ENCODE measurements at regions of chr10 and their contacts with region 1.

Region 1: GRCh38 chr10:121662945-121663917 is 65.0 kb upstream of the FGFR2 start:
- DNase-seq: peak; percentile 36 to 90
- H3K4me3 ChIP-seq: no peak overlapping the region
- H3K27ac ChIP-seq: no peak overlapping the region
- H3K4me1 ChIP-seq: peaks cover 0 to 6% (median 4%) of the 10 kb centered on the region in 4 experiments; a peak in 5 of 7 replicates
- H3K27me3 ChIP-seq: no peaks in the 10 kb centered on the region
- CTCF ChIP-seq: peak; percentile 76 to 86 (median 84)
- EP300 ChIP-seq: no peak
- POLR2A ChIP-seq: no peak
- RAD21 ChIP-seq: peak; percentile 82 to 83

Region 2: GRCh38 chr10:121516093-121516865 is 147.0 kb before region 1 on chr10:
- CTCF ChIA-PET with region 1: no interaction called
- POLR2A ChIA-PET with region 1: no interaction called
- DNase-seq: no peak
- H3K4me3 ChIP-seq: no peak overlapping the region
- H3K27ac ChIP-seq: no peak overlapping the region
- H3K4me1 ChIP-seq: peaks cover 0 to 6% (median 0%) of the 10 kb centered on the region in 4 experiments; a peak in 2 of 7 replicates
- H3K27me3 ChIP-seq: no peaks in the 10 kb centered on the region
- CTCF ChIP-seq: no peak
- EP300 ChIP-seq: no peak
- POLR2A ChIP-seq: no peak
- RAD21 ChIP-seq: no peak

Region 3: DNA sequence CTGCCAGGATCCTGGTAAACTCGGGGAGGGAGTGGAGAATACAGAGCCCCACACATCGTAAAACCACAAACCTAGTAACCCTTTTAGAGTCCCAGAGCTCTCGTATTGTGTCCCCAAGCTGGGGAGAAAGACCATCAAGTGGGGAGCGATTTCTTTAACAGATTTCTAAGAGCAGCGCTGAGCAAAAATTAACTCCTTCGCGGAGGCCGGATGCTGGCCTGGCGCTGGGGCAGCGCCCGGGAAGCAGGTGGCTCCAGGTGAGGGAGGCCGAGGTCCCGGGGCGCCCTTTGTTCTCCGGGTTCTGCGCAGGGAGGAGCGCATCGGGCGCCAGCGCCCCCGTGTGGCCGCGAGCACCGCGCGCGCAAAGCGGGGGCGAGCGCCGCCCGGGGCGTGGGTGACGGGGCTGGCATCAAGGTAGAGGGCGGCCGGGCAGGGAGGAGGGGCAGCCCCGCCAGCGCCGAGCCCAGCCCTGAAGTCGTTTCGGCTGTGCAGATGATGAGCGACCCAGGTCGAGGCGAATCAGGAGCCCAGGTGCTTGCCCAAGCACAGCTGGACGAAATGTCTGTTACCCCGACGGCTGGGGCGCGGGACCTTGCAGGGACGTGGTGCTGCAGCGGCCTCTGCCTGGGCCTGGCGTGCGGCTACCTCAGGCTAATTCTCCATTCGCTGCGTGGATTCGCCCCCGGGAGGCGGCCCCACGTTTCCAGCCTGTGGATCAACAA is 54.6 kb before region 1 on chr10:
- CTCF ChIA-PET with region 1: interaction called, 27 read pairs
- POLR2A ChIA-PET with region 1: no interaction called
- DNase-seq: peak in 1 of 2 experiments; percentile 90
- H3K4me3 ChIP-seq: peak overlapping the region in 2 of 4 experiments; percentile 29 to 47; a peak in 3 of 8 replicates
- H3K27ac ChIP-seq: no peak overlapping the region
- H3K4me1 ChIP-seq: peaks cover 0 to 6% (median 2%) of the 10 kb centered on the region in 4 experiments; a peak in 2 of 7 replicates
- H3K27me3 ChIP-seq: peaks cover 0 to 8% (median 4%) of the 10 kb centered on the region in 4 experiments; a peak in 3 of 7 replicates
- CTCF ChIP-seq: peak; percentile 81 to 82 (median 81)
- EP300 ChIP-seq: no peak
- POLR2A ChIP-seq: no peak
- RAD21 ChIP-seq: peak; percentile 66 to 84

Region 4: GRCh38 chr10:121624836-121625486 is 38.3 kb before region 1 on chr10:
- CTCF ChIA-PET with region 1: interaction called, 19 read pairs
- POLR2A ChIA-PET with region 1: no interaction called
- DNase-seq: no peak
- H3K4me3 ChIP-seq: no peak overlapping the region
- H3K27ac ChIP-seq: no peak overlapping the region
- H3K4me1 ChIP-seq: no peaks in the 10 kb centered on the region
- H3K27me3 ChIP-seq: no peaks in the 10 kb centered on the region
- CTCF ChIP-seq: no peak
- EP300 ChIP-seq: no peak
- POLR2A ChIP-seq: no peak
- RAD21 ChIP-seq: no peak

Region 5: GRCh38 chr10:121648059-121648458 is 15.2 kb before region 1 on chr10:
- CTCF ChIA-PET with region 1: interaction called, 17 read pairs
- POLR2A ChIA-PET with region 1: no interaction called
- DNase-seq: no peak
- H3K4me3 ChIP-seq: no peak overlapping the region
- H3K27ac ChIP-seq: no peak overlapping the region
- H3K4me1 ChIP-seq: peaks cover 0 to 4% (median 0%) of the 10 kb centered on the region in 4 experiments; a peak in 3 of 7 replicates
- H3K27me3 ChIP-seq: no peaks in the 10 kb centered on the region
- CTCF ChIP-seq: no peak
- EP300 ChIP-seq: no peak
- POLR2A ChIP-seq: no peak
- RAD21 ChIP-seq: no peak

Region 6: GRCh38 chr10:121681997-121682687 is 18.9 kb after region 1 on chr10:
- CTCF ChIA-PET with region 1: interaction called, 15 read pairs
- POLR2A ChIA-PET with region 1: no interaction called
- DNase-seq: no peak
- H3K4me3 ChIP-seq: no peak overlapping the region
- H3K27ac ChIP-seq: no peak overlapping the region
- H3K4me1 ChIP-seq: peaks cover 0 to 5% (median 0%) of the 10 kb centered on the region in 4 experiments; a peak in 2 of 7 replicates
- H3K27me3 ChIP-seq: no peaks in the 10 kb centered on the region
- CTCF ChIP-seq: no peak
- EP300 ChIP-seq: no peak
- POLR2A ChIP-seq: no peak
- RAD21 ChIP-seq: no peak

Region 7: GRCh38 chr10:121696854-121697253 is 33.6 kb after region 1 on chr10:
- CTCF ChIA-PET with region 1: interaction called, 13 read pairs
- POLR2A ChIA-PET with region 1: no interaction called
- DNase-seq: peak; percentile 29 to 95
- H3K4me3 ChIP-seq: no peak overlapping the region
- H3K27ac ChIP-seq: no peak overlapping the region
- H3K4me1 ChIP-seq: peaks cover 0 to 8% (median 0%) of the 10 kb centered on the region in 4 experiments; a peak in 1 of 7 replicates
- H3K27me3 ChIP-seq: no peaks in the 10 kb centered on the region
- CTCF ChIP-seq: peak; percentile 30 to 69 (median 52)
- EP300 ChIP-seq: no peak
- POLR2A ChIP-seq: no peak
- RAD21 ChIP-seq: peak; percentile 49 to 65